GM10248 (cell line): ENCODE measurements at regions of chr12 and their contacts with region 1.

Region 1: GRCh38 chr12:105221583-105222283 is 14.2 kb downstream of the APPL2 start:
- DNase-seq: no peak
- CTCF ChIP-seq: no peak

Region 2: GRCh38 chr12:105233041-105233905 is 11.5 kb after region 1 on chr12:
- CTCF ChIA-PET with region 1: interaction called, 22 read pairs
- POLR2A ChIA-PET with region 1: no interaction called
- DNase-seq: no peak
- CTCF ChIP-seq: no peak

Region 3: DNA sequence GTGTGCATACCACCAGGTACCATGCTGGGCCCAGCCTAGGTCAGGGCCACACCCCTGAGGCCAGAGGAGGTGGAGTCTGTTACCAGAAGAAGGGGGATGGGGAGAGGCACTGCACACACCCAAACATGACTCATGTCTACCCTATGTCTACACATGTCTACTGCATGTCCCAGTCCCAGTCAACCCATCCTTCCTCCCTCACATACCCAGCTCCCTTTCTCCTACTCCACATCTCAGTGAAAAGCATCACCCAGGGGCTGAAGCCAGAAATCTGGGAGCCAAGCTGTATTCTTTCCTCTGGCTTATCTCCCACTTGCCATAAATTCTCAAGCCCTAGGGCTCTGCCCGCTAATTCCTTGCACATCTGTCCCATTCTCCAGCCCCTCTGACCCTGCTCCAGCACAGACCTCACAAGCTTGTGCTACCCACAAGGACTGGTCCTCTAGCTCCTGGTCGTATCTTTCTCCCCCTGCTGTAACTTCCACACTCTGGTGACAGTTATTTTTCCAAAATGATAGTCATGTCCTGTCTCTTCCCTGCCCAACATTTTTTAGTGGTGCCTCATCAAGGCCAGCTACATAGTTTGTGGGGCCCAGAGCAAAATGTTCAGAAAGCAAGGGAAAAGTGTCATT is 32.3 kb after region 1 on chr12:
- CTCF ChIA-PET with region 1: no interaction called
- POLR2A ChIA-PET with region 1: no interaction called
- DNase-seq: no peak
- CTCF ChIP-seq: no peak